ENCODE measurements at regions of chr18 and their contacts with region 1.

Region 1: DNA sequence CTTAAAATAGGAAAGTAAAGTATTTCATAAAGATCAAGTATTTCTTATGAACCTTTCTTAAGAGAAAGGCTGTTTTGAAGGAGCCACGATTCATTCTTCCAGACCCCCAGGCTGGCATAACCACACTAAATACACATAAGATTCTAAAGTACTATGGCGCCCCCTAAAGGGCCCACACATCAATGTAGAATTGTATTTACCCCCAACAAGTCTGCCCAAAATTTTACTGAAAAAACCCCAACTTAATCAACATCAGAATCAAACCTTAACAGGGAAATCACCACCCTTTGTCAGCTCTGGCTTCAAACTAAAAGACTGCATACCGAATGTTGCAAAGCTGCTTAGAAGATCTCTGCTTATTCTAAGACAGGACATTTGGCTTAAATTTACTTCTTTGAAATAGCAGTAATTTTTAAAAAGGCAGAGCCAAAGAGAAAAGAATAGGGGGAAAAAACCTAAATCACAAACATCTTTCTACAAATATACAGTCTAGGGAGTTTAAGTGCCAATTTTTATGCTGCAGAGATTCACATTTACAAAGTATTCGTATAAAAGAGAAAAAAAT is 20.4 kb upstream of the BCL2 start:
- DNase-seq: peak in 13 of 14 experiments; percentile 9 to 75 (median 32)
- ATAC-seq: peak; percentile 51
- H3K4me3 ChIP-seq: no peak overlapping the region
- H3K4me3 Mint-ChIP-seq: no peak overlapping the region
- H3K27ac ChIP-seq: no peak overlapping the region
- H3K27ac Mint-ChIP-seq: no peak overlapping the region
- H3K4me1 ChIP-seq: no peaks in the 10 kb centered on the region
- H3K4me1 Mint-ChIP-seq: no peaks in the 10 kb centered on the region
- H3K27me3 ChIP-seq: no peaks in the 10 kb centered on the region
- H3K27me3 Mint-ChIP-seq: no peaks in the 10 kb centered on the region
- CTCF ChIP-seq: peak; percentile 65

Region 2: DNA sequence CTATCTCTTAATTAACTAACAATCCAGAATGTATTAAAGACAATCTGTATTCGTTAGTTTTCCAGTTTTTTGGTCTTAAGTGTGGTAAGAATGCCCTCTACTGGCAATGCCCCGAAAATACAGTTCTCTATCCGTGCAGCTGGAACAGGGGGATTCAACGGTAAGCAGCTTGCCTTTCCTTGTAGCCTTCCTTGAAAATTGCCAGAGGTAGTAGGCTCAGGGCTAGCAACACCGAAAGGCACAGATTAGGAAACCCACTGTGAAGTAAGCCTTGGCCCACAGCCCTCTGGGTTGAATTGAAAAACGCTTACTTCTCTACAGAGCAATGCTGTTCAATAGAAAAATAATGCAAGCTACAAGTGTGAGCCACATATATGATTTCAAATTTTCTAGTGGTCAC is 99.3 kb after region 1 on chr18:
- CTCF ChIA-PET with region 1: interaction called, 7 read pairs
- POLR2A ChIA-PET with region 1: interaction called, 4 read pairs
- intact Hi-C with region 1: loop called (anchors 1 kb)
- DNase-seq: peak; percentile 7 to 79 (median 32)
- ATAC-seq: peak; percentile 79
- H3K4me3 ChIP-seq: no peak overlapping the region
- H3K4me3 Mint-ChIP-seq: no peak overlapping the region
- H3K27ac ChIP-seq: no peak overlapping the region
- H3K27ac Mint-ChIP-seq: no peak overlapping the region
- H3K4me1 ChIP-seq: no peaks in the 10 kb centered on the region
- H3K4me1 Mint-ChIP-seq: no peaks in the 10 kb centered on the region
- H3K27me3 ChIP-seq: no peaks in the 10 kb centered on the region
- H3K27me3 Mint-ChIP-seq: peaks cover 21% of the 10 kb centered on the region
- CTCF ChIP-seq: peak; percentile 95

Measured in CD4-positive, alpha-beta T cell (primary cell).